HepG2 (cell line): ENCODE measurements at regions of chr4 and their contacts with region 1.

Region 1: GRCh38 chr4:51831133-51831532 is 11.8 kb upstream of the DCUN1D4 start:
- DNase-seq: peak; percentile 46
- ATAC-seq: peak; percentile 95
- H3K4me3 ChIP-seq: no peak overlapping the region
- H3K27ac ChIP-seq: no peak overlapping the region
- H3K4me1 ChIP-seq: no peaks in the 10 kb centered on the region
- H3K27me3 ChIP-seq: no peaks in the 10 kb centered on the region; a peak in 1 of 5 replicates
- CTCF ChIP-seq: peak; percentile 88
- EP300 ChIP-seq: no peak
- POLR2A ChIP-seq: no peak
- RAD21 ChIP-seq: peak; percentile 73

Region 2: DNA sequence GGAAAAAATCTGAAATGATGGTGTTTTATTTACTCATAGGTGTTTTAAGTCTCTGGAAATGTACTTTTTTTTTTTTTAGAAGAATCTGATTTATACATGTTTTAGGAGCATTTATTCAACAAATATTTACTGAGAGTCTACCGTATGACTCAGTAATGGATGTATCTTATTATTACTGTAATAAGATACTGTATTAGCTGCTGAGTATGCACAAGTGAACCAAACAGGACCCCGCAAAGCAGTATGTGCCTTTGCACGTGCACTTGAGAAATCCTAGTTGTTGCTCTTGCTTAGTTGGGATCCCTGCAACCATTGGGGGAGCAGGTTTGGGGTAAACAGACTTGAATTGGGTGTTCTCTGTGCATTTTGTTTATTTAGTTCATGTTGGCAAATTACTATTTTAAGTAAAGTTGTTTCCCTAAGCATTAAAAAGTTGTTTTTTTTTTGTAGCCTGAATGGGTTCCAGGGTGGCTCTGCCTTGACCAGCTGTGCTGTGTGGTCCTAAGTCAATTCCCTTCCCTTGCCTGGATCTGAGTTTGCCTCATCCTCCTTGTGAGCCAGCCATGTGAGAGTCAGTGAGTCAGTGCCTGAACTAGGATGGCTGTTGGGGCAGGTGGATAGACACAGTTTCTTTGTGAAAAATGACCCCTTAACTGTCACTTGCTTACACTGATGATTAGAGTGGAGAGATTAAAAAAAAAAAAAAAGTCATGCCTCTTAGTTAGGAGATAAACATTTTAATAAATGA is 39.5 kb after region 1 on chr4:
- CTCF ChIA-PET with region 1: no interaction called
- POLR2A ChIA-PET with region 1: no interaction called
- in situ Hi-C with region 1: no loop called
- intact Hi-C with region 1: no loop called
- DNase-seq: no peak
- ATAC-seq: no peak
- H3K4me3 ChIP-seq: no peak overlapping the region
- H3K27ac ChIP-seq: no peak overlapping the region
- H3K4me1 ChIP-seq: no peaks in the 10 kb centered on the region
- H3K27me3 ChIP-seq: no peaks in the 10 kb centered on the region
- CTCF ChIP-seq: no peak
- EP300 ChIP-seq: no peak
- POLR2A ChIP-seq: no peak
- RAD21 ChIP-seq: no peak

Region 3: DNA sequence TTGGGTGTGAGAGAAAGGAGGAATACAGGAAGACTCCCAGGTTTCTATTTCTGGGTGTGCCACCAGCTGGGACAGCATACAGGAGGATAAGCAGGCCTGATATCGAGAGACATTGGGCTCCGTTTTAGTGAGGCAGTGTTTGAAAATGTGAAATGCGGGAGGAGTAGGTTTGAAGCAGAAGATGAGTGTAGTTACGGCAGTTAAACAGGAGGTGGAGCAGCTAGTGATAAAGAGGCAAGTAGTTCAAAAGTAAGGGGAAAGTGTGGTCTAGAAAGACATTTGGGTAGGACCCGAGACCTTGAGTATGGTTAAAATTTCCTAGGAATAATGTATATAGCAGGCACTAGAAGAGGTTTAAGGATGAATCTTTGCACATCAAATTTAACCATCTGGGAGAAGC is 54.2 kb after region 1 on chr4:
- CTCF ChIA-PET with region 1: interaction called, 4 read pairs
- POLR2A ChIA-PET with region 1: no interaction called
- in situ Hi-C with region 1: no loop called
- intact Hi-C with region 1: loop called (anchors 1 kb)
- DNase-seq: peak; percentile 44
- ATAC-seq: peak; percentile 58; the same call in 2 of the 3 replicates
- H3K4me3 ChIP-seq: no peak overlapping the region
- H3K27ac ChIP-seq: no peak overlapping the region
- H3K4me1 ChIP-seq: peaks cover 11% of the 10 kb centered on the region
- H3K27me3 ChIP-seq: no peaks in the 10 kb centered on the region
- CTCF ChIP-seq: peak; percentile 62
- EP300 ChIP-seq: no peak
- POLR2A ChIP-seq: no peak
- RAD21 ChIP-seq: no peak

Region 4: GRCh38 chr4:51895813-51896408 is 64.8 kb after region 1 on chr4:
- CTCF ChIA-PET with region 1: interaction called, 8 read pairs
- POLR2A ChIA-PET with region 1: no interaction called
- in situ Hi-C with region 1: no loop called
- intact Hi-C with region 1: loop called (anchors 1 kb)
- DNase-seq: peak; percentile 77
- ATAC-seq: peak; percentile 100
- H3K4me3 ChIP-seq: no peak overlapping the region
- H3K27ac ChIP-seq: peak overlapping the region; percentile 55
- H3K4me1 ChIP-seq: peaks cover 13% of the 10 kb centered on the region
- H3K27me3 ChIP-seq: no peaks in the 10 kb centered on the region
- CTCF ChIP-seq: peak; percentile 87
- EP300 ChIP-seq: no peak
- POLR2A ChIP-seq: no peak
- RAD21 ChIP-seq: peak; percentile 70

Region 5: DNA sequence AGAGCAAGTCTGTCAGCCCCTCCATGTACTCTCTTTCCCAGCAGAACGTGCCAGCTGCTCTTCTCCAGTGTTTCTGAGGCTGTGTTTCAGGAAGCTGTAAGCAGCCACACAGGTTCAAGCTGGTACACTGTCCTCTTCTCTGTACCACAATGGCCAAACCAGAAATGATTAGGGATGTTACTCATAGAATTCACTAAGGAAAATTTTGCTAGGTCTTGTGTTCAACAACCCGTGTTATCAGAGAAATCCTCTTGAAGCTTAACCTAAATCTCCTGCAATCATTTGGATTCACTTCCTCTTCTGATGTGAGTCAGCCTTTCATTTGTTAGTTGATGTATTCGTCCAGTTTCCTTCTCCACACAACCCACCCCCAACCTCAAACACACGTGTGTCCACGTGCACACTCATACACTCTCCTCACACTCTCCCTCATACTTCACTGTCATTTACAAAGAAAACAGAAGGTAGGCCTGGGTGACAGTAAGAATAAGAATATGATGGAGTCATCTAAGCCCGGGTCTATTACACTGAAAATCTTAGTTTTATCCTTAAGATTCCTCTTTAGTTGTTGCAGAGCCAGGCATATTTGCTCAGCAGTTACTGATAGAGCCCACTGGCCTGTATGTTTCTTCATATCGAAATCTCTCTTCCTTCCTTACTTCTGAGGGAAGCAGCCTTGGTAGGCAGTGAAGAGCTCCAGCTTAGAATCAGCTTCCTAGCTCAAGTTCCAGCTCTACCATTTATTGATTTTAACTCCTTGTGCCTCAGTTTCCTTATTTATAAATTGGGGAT is 75.2 kb after region 1 on chr4:
- CTCF ChIA-PET with region 1: no interaction called
- POLR2A ChIA-PET with region 1: no interaction called
- in situ Hi-C with region 1: no loop called
- intact Hi-C with region 1: no loop called
- DNase-seq: no peak
- ATAC-seq: no peak
- H3K4me3 ChIP-seq: no peak overlapping the region
- H3K27ac ChIP-seq: no peak overlapping the region
- H3K4me1 ChIP-seq: peaks cover 49% of the 10 kb centered on the region
- H3K27me3 ChIP-seq: no peaks in the 10 kb centered on the region
- CTCF ChIP-seq: no peak
- EP300 ChIP-seq: no peak
- POLR2A ChIP-seq: no peak
- RAD21 ChIP-seq: no peak

Region 6: DNA sequence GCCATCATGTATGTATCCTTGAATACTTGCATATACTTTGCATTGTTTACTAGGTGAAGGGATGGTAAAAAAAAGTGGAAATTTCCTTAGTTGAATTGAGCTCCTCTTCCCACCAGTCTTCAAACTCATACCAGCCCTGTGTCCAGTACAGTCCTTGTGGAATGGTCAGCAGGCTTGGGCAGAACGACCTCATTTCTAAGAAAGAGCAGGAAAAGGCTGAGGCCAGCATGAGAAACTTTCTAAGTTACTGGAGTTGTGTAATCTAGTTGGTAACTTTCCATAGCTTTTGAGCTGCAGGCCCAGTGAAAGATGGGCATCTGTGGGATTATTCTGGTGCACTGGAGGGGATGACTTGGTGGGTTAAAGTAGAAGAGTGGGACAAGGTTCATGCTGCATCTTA is 99.4 kb after region 1 on chr4:
- CTCF ChIA-PET with region 1: no interaction called
- POLR2A ChIA-PET with region 1: no interaction called
- in situ Hi-C with region 1: no loop called
- intact Hi-C with region 1: no loop called
- DNase-seq: no peak
- ATAC-seq: no peak
- H3K4me3 ChIP-seq: no peak overlapping the region
- H3K27ac ChIP-seq: no peak overlapping the region
- H3K4me1 ChIP-seq: peaks cover 3% of the 10 kb centered on the region; the same call in 1 of the 2 replicates
- H3K27me3 ChIP-seq: no peaks in the 10 kb centered on the region
- CTCF ChIP-seq: no peak
- EP300 ChIP-seq: no peak
- POLR2A ChIP-seq: no peak
- RAD21 ChIP-seq: no peak

Region 7: GRCh38 chr4:52015366-52015765 is 184.2 kb after region 1 on chr4:
- CTCF ChIA-PET with region 1: interaction called, 5 read pairs
- POLR2A ChIA-PET with region 1: no interaction called
- in situ Hi-C with region 1: no loop called
- intact Hi-C with region 1: loop called (anchors 1 kb)
- DNase-seq: peak; percentile 58
- ATAC-seq: peak; percentile 88
- H3K4me3 ChIP-seq: no peak overlapping the region
- H3K27ac ChIP-seq: no peak overlapping the region
- H3K4me1 ChIP-seq: peaks cover 14% of the 10 kb centered on the region
- H3K27me3 ChIP-seq: no peaks in the 10 kb centered on the region
- CTCF ChIP-seq: peak; percentile 68
- EP300 ChIP-seq: no peak
- POLR2A ChIP-seq: no peak
- RAD21 ChIP-seq: peak; percentile 33; the same call in 1 of the 2 replicates

Region 8: DNA sequence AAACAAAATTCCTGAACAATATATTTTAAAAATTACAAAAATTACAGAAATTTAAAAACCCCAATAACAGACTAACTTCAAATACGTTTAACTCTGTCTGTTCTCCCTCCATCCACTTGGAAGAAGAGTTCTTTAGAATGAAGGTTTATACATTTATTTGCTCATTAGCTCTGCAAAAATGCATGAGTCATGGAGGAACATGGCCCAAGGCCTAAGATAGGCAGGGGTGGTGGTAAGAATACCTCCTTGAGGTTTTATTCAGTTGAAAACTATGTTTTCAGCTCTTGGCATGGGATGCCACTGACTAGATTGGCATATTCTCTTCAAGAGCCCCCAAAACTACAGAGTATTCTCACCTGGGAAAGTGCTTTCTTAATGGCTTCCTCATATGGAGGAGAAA is 197.8 kb after region 1 on chr4:
- CTCF ChIA-PET with region 1: interaction called, 20 read pairs
- POLR2A ChIA-PET with region 1: interaction called, 3 read pairs
- in situ Hi-C with region 1: no loop called
- intact Hi-C with region 1: loop called (anchors 1 kb)
- DNase-seq: no peak
- ATAC-seq: no peak
- H3K4me3 ChIP-seq: no peak overlapping the region
- H3K27ac ChIP-seq: no peak overlapping the region
- H3K4me1 ChIP-seq: no peaks in the 10 kb centered on the region
- H3K27me3 ChIP-seq: no peaks in the 10 kb centered on the region
- CTCF ChIP-seq: no peak
- EP300 ChIP-seq: no peak
- POLR2A ChIP-seq: no peak
- RAD21 ChIP-seq: no peak